ENCODE measurements at regions of chr5 and their contacts with region 1.

Region 1: GRCh38 chr5:157558041-157558595 is 17.5 kb downstream of the ADAM19 start:
- DNase-seq: no peak
- H3K4me3 ChIP-seq: no peak overlapping the region
- H3K27ac ChIP-seq: no peak overlapping the region
- H3K4me1 ChIP-seq: no peaks in the 10 kb centered on the region
- H3K27me3 ChIP-seq: no peaks in the 10 kb centered on the region
- CTCF ChIP-seq: no peak
- POLR2A ChIP-seq: no peak

Region 2: DNA sequence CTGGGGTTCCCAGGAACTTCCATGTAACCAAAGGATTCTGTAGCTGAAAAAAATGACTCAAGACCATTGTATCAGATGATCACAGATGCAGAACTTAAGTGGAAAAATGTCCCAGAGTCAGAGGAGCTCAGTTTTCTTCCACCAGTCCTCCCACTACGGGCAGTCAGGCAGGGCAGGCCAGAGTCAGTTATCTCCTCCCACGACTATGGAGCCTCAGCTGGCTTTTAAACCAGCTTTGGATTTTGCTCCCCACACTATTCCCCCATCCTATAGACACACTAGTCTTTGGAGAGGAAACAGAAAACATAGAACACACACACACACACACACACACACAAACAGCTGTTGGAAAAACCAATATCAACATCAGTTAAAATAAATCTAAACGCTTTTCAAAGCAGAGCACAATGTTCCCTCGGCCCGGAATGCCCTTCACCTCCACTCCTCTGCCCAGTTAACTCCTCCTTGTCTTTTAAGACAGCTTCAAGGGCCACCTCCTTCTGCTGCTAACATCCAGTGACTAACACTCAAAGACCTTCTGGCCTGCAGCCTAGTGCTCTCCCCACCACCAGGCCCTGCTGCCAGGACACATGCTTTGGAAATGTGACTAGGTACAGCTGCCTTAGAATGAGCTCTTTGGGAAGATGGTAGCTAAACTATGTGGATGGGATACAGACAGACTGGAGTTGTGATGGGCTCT is 41.3 kb before region 1 on chr5:
- intact Hi-C with region 1: loop called (anchors 5 kb)
- DNase-seq: peak; percentile 16
- H3K4me3 ChIP-seq: no peak overlapping the region
- H3K27ac ChIP-seq: peak overlapping the region; percentile 51 to 55
- H3K4me1 ChIP-seq: no peaks in the 10 kb centered on the region
- H3K27me3 ChIP-seq: no peaks in the 10 kb centered on the region
- CTCF ChIP-seq: no peak
- POLR2A ChIP-seq: no peak

Region 3: GRCh38 chr5:158511454-158511853 is 953.3 kb after region 1 on chr5:
- intact Hi-C with region 1: no loop called
- DNase-seq: no peak
- H3K4me3 ChIP-seq: no peak overlapping the region
- H3K27ac ChIP-seq: no peak overlapping the region
- H3K4me1 ChIP-seq: no peaks in the 10 kb centered on the region
- H3K27me3 ChIP-seq: no peaks in the 10 kb centered on the region
- CTCF ChIP-seq: no peak
- POLR2A ChIP-seq: no peak

Measured in prostate gland (tissue), 2 donors.